ENCODE measurements at regions of chr9 and their contacts with region 1.

Region 1: DNA sequence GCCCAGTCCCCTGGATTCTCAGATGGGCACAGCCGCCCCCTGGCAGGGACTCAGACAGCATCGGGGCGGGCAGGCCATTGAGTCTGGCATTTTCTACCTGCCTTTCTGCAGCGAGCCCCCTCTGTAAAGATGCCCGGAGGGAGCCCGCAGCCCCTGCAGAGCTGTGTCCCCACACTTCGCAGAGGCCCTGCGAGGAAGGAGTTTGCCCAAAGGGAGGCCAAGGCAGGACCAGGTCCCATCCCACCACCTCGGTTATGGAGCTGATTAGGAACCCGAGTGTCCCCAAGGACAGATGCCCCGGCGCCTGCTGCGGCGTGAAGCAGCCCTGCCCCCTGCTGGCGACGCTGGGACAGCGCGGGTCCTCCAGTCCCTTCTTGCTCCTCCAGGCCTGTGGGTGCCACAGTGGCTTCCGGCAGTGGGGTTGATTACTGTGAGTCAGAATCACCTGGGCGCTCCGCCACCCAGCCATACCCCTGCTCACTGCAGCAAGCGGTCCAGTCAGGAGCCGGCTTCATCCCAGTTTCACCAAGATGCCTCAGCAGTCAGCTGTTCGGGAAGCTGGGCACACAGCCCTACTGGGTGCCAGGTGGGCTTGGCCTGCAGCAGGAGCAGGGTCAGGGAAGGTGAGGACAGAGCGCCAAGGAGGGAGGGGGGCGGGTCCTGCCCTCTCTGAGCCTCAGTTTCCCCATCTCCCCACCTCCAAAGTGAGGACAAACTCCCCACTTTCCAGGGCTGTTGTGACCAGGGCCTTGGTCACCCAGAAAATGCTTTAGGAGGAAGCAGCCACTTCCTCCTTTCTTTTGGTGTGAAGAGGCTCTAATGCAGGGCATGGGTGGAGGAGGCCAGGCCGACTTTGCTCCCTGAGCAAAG is 117.1 kb downstream of the RXRA start:
- DNase-seq: peak; percentile 89
- ATAC-seq: peak; percentile 97
- H3K4me3 ChIP-seq: no peak overlapping the region
- H3K4me3 Mint-ChIP-seq: no peak overlapping the region
- H3K27ac ChIP-seq: peak overlapping the region in 1 of 2 donors; percentile 25
- H3K27ac Mint-ChIP-seq: peak overlapping the region; percentile 61
- H3K4me1 ChIP-seq: peaks cover 22 to 25% of the 10 kb centered on the region in 2 donors
- H3K4me1 Mint-ChIP-seq: peaks cover 22% of the 10 kb centered on the region
- H3K27me3 ChIP-seq: peaks cover 0 to 30% (median 3%) of the 10 kb centered on the region in 4 experiments
- H3K27me3 Mint-ChIP-seq: peaks cover 16% of the 10 kb centered on the region
- CTCF ChIP-seq: peak; percentile 99

Region 2: GRCh38 chr9:134135343-134136118 is 307.9 kb before region 1 on chr9 and contains the start of gene WDR5:
- CTCF ChIA-PET with region 1: interaction called, 4 read pairs
- POLR2A ChIA-PET with region 1: interaction called, 4 read pairs
- intact Hi-C with region 1: loop called (anchors 1 kb)
- DNase-seq: peak; percentile 93
- ATAC-seq: peak; percentile 86
- H3K4me3 ChIP-seq: peak within 1 kb of the TSS; percentile 46 to 98 (median 92)
- H3K4me3 Mint-ChIP-seq: peak within 1 kb of the TSS; percentile 91
- H3K27ac ChIP-seq: peak within 1 kb of the TSS; percentile 56 to 85
- H3K27ac Mint-ChIP-seq: peak within 1 kb of the TSS; percentile 93
- H3K4me1 ChIP-seq: peaks cover 22 to 30% of the 10 kb centered on the region in 2 donors
- H3K4me1 Mint-ChIP-seq: peaks cover 36% of the 10 kb centered on the region
- H3K27me3 ChIP-seq: no peaks in the 10 kb centered on the region
- H3K27me3 Mint-ChIP-seq: no peaks in the 10 kb centered on the region
- CTCF ChIP-seq: peak; percentile 37
- total RNA-seq, gene WDR5: 21.1 and 23.8 TPM in 2 replicates

Region 3: DNA sequence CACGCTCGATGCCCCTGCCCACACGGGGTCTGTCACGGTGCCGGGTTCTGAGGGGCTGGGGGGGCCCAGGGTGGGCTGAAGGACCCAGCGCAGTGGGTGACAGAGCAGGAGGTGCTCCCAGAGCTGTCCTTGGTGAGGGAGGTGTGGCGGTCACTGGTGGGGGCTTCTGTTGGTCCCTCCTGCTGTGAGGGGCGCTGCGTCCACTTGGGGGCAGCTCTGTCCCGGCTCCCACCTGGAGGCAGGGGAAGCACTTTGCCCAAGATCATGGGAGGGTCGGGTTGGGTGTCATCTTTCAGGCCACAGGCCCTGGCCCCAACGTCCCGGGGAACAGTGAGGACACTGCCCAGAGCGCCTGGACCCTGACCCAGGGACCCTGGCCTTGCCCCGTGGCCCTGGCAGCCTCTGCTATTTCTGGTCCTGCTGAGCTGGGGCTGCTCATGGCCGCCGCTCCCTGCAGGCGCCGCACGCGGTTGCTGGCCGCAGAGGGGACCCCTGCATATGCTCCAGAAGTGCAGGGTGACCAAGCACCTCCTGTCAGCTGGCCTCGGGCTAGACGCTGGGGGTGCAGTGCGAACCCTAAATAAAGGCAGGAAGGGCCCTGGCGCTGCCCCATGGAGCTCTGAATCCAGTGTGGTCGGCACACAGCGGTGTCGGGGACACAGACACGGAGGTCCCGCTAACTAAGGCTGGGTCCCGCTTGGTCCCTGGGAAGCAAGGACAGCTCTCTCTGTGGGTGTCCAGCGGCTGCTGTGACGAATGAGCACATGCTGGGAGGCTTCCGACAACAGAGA is 267.4 kb before region 1 on chr9:
- CTCF ChIA-PET with region 1: interaction called, 94 read pairs
- POLR2A ChIA-PET with region 1: no interaction called
- intact Hi-C with region 1: no loop called
- DNase-seq: no peak
- ATAC-seq: no peak
- H3K4me3 ChIP-seq: no peak overlapping the region
- H3K4me3 Mint-ChIP-seq: no peak overlapping the region
- H3K27ac ChIP-seq: no peak overlapping the region
- H3K27ac Mint-ChIP-seq: no peak overlapping the region
- H3K4me1 ChIP-seq: peaks cover 21 to 23% of the 10 kb centered on the region in 2 donors
- H3K4me1 Mint-ChIP-seq: peaks cover 20% of the 10 kb centered on the region
- H3K27me3 ChIP-seq: peaks cover 0 to 28% (median 8%) of the 10 kb centered on the region in 4 experiments
- H3K27me3 Mint-ChIP-seq: peaks cover 23% of the 10 kb centered on the region
- CTCF ChIP-seq: no peak

Region 4: DNA sequence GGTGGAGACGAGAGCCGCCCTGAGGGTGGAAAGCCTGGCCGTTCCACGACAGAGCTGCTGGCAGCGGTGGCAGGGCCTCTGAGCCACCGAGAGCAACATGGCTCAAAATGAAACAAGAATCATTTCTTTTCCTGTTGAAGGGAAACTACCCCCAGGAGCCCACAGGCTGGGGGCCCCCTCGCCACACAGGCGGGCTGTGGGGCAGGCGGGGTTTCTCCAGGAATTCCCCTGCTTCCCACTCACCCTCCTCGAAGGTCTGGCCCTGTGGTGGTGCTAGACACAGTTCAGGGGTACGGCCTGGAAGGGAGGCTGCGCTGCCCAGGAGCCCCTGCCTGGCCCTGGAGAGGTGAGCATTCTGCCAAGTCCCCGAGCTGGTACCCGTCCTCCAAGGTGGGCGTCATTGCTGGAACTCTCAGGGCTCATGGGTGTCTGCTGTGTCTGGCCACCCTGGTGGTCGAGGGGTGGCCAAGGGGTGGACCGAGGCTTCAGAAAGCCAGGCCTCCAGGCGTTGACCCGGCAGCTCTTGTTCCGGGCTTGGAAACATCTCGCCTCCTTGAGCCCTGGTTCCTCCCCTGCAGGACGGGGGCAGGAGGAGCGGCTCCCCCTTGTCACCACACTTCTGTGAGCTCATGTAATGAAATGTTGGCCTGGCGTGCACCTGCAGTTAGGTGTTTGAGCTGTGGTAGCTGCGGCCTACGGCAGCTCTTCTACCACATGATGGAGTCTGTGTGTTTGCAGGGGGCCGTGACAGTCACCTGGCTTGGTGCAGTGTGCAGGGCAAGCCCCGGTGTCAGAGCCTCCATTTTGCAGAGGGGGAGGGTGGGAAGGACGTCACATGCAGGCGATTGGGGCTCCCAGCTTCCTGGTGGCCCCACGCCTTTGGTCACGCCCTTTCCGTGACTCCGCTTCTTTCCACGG is 51.8 kb before region 1 on chr9:
- CTCF ChIA-PET with region 1: interaction called, 3 read pairs
- POLR2A ChIA-PET with region 1: no interaction called
- intact Hi-C with region 1: loop called (anchors 2 kb)
- DNase-seq: peak; percentile 86
- ATAC-seq: peak; percentile 36
- H3K4me3 ChIP-seq: peak overlapping the region in 3 of 5 experiments; percentile 23 to 38 (median 25)
- H3K4me3 Mint-ChIP-seq: peak overlapping the region; percentile 87
- H3K27ac ChIP-seq: peak overlapping the region; percentile 70 to 90
- H3K27ac Mint-ChIP-seq: peak overlapping the region; percentile 95
- H3K4me1 ChIP-seq: peaks cover 59 to 65% of the 10 kb centered on the region in 2 donors
- H3K4me1 Mint-ChIP-seq: peaks cover 59% of the 10 kb centered on the region
- H3K27me3 ChIP-seq: no peaks in the 10 kb centered on the region
- H3K27me3 Mint-ChIP-seq: no peaks in the 10 kb centered on the region
- CTCF ChIP-seq: no peak

Region 5: GRCh38 chr9:134455934-134456739 is 12.7 kb after region 1 on chr9:
- CTCF ChIA-PET with region 1: interaction called, 13 read pairs
- POLR2A ChIA-PET with region 1: no interaction called
- intact Hi-C with region 1: loop called (anchors 2 kb)
- DNase-seq: peak; percentile 85
- ATAC-seq: peak; percentile 88
- H3K4me3 ChIP-seq: peak overlapping the region; percentile 51 to 67 (median 60)
- H3K4me3 Mint-ChIP-seq: peak overlapping the region; percentile 88
- H3K27ac ChIP-seq: peak overlapping the region; percentile 77 to 85
- H3K27ac Mint-ChIP-seq: peak overlapping the region; percentile 81
- H3K4me1 ChIP-seq: peaks cover 14 to 20% of the 10 kb centered on the region in 2 donors
- H3K4me1 Mint-ChIP-seq: peaks cover 11% of the 10 kb centered on the region
- H3K27me3 ChIP-seq: no peaks in the 10 kb centered on the region
- H3K27me3 Mint-ChIP-seq: no peaks in the 10 kb centered on the region
- CTCF ChIP-seq: no peak

Measured in B cell (primary cell).